ENCODE measurements at regions of chr19 and their contacts with region 1.

Region 1: GRCh38 chr19:3665681-3666544 is 34.4 kb downstream of the PIP5K1C start:
- H3K4me3 ChIP-seq: no peak overlapping the region
- H3K27ac ChIP-seq: no peak overlapping the region
- H3K4me1 ChIP-seq: no peaks in the 10 kb centered on the region
- CTCF ChIP-seq: peak; percentile 98

Region 2: DNA sequence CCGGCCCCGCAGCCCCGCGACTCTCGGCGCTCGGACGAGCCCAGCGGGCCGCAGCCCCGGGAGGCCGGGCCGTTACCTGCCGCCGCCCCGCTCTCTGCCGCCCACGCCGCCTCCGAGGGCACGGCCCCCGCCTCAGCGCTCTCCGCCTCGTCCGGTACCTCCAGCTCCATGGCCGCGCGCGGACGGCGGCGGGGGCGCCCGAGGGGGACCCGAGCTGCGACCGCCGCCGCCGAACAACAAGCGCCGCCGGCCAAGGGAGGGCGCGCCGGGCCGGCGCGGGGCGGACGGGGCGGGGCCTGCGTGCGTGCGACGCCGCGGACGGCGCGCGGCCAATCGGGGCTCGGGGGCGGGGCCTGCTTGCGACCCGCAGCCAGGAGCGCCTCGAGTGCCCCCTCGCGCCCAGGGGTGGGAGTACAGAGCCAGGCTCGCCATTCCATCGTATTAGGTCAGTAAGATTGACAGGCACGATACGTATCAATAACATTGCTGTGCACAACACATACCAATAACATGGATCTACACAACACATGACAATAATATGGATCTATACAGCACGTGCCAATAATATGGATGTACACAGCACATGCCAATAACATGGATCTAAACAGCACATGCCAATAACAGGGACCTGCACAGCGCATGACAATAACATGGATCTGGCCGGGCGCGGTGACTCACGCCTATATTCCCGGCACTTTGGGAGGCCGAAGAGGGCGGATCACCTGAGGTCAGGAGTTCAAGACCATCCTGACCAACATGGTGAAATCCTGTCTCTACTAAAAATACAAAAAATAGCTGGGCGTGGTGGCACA is 34.5 kb after region 1 on chr19 and contains the start of gene PIP5K1C:
- CTCF ChIA-PET with region 1: interaction called, 25 read pairs
- POLR2A ChIA-PET with region 1: no interaction called
- H3K4me3 ChIP-seq: peak within 1 kb of the TSS; percentile 69
- H3K27ac ChIP-seq: peak within 1 kb of the TSS; percentile 31; the same call in 1 of the 2 replicates
- H3K4me1 ChIP-seq: no peaks in the 10 kb centered on the region
- CTCF ChIP-seq: peak; percentile 74; the same call in 1 of the 2 replicates

Region 3: GRCh38 chr19:3721131-3721886 is 55.4 kb after region 1 on chr19:
- CTCF ChIA-PET with region 1: interaction called, 10 read pairs
- POLR2A ChIA-PET with region 1: interaction called, 3 read pairs
- H3K4me3 ChIP-seq: no peak overlapping the region; the same call in none of the 2 replicates
- H3K27ac ChIP-seq: no peak overlapping the region
- H3K4me1 ChIP-seq: no peaks in the 10 kb centered on the region
- CTCF ChIP-seq: no peak

Region 4: DNA sequence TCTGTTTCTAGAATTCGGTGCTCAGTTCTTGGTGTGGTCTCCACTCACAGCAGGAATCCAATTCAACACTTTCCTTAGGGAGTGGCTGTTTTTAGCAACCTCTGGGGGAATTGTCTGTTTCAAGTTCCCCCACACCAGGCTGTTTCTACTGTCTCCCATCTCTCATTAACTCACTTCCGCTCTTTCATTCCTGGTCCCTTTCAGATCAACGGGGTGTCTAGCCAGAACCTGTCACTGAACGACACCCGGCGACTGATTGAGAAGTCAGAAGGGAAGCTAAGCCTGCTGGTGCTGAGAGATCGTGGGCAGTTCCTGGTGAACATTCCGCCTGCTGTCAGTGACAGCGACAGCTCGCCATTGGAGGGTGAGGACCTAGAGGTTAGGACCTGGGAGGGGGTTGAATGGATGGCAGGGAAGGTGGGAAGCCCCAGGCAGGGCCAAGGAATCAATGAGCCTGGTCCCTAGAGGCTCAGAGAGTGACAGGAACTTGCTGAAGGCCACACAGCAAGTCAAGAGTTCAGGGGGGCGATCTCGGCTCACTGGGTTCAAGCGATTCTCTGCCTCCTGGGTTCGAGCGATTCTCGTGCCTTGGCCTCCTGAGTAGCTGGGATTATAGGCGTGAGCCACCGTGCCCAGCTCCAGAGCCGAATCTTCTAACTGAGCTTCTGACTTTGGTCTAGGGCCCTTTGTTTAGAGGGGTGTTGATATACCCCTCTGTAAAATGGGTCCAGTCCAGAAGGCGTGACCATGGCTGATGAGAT is 67.8 kb after region 1 on chr19:
- CTCF ChIA-PET with region 1: no interaction called
- POLR2A ChIA-PET with region 1: no interaction called
- H3K4me3 ChIP-seq: no peak overlapping the region
- H3K27ac ChIP-seq: no peak overlapping the region
- H3K4me1 ChIP-seq: no peaks in the 10 kb centered on the region
- CTCF ChIP-seq: no peak

Measured in HEK293 (cell line).